Activated naive CD4-positive, alpha-beta T cell treated with anti-CD3 and anti-CD28 coated beads for 36 hours (primary cell): ENCODE measurements at regions of chr1 and their contacts with region 1.

Region 1: DNA sequence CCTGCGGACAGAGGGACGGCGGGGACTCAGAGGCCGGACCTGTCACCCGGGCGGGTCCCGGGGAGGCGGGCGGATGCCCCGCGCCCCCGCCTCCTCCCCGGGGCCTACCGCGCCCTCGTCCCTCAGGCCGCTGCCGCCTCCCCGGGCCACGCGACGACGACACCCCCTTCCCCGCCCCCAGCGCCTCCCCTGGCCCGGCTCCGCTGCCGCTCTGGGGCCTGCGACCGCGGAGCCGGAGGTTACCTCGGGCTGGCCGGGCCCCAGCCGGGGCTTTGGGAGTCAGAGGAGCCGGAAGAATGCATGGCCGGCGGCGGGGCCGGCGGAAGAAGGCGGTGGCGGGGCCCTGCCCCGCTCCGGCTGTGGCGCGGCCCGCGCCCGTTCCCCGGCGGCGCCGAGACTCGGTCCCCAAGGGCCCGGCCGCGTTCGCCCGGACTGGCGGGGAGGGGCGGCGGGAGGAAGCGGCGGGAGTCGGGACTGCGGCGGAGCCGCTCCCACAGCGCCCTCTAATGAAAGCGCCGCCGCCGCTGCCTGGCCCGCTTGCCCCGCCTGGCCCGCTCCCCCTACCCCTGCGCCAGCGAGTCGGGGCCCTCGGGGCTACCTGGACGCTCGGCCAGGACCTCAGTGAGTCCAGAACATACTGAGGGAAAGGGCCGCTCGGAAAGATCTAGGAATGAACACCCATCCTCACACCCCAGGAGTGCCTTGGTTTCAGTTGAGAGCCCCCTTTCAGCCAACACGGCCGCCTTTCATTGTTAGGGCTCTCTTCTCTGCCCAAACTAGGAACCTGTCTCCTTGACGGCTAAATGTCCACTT is at the start of gene LPGAT1:
- DNase-seq: peak; percentile 75
- H3K4me3 Mint-ChIP-seq: peak within 1 kb of the TSS; percentile 82
- H3K27ac Mint-ChIP-seq: peak within 1 kb of the TSS; percentile 75
- H3K4me1 Mint-ChIP-seq: peaks cover 47% of the 10 kb centered on the region
- H3K27me3 Mint-ChIP-seq: no peaks in the 10 kb centered on the region
- total RNA-seq, gene LPGAT1: 18.6 to 21.7 TPM

Region 2: DNA sequence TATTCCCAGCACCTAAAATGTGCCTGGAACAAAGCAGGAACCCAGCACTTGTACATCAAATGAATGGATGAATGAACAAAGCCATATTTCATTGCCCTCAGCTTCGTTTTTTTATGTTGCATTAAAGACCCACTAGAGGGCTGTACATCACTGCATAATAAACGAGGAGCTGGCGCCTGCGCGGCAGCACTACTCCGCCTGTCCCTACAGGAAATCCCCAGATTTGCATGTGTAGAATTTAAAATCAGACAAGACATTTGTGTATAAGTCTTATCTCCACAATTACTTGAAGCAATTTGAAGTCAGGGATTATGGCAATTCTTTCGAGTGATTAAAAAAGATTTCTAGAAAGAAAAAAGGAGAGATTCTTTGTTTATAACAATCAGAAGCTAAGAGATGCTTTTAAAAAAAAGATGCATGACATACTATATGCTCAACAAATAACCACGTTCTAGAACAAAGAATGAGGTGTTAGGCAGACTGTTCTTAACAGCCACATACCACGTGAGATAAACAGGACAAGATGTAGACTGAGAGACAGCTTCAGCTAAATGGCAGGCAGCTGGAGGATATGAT is 149.7 kb before region 1 on chr1:
- CTCF ChIA-PET with region 1: interaction called, 4 read pairs
- intact Hi-C with region 1: loop called (anchors 1 kb)
- DNase-seq: peak; percentile 80
- H3K4me3 Mint-ChIP-seq: no peak overlapping the region
- H3K27ac Mint-ChIP-seq: peak overlapping the region; percentile 24
- H3K4me1 Mint-ChIP-seq: peaks cover 7% of the 10 kb centered on the region
- H3K27me3 Mint-ChIP-seq: no peaks in the 10 kb centered on the region

Region 3: GRCh38 chr1:211951856-211952255 is 121.3 kb after region 1 on chr1:
- CTCF ChIA-PET with region 1: no interaction called
- intact Hi-C with region 1: no loop called
- DNase-seq: no peak
- H3K4me3 Mint-ChIP-seq: no peak overlapping the region
- H3K27ac Mint-ChIP-seq: no peak overlapping the region
- H3K4me1 Mint-ChIP-seq: peaks cover 7% of the 10 kb centered on the region
- H3K27me3 Mint-ChIP-seq: no peaks in the 10 kb centered on the region

Region 4: DNA sequence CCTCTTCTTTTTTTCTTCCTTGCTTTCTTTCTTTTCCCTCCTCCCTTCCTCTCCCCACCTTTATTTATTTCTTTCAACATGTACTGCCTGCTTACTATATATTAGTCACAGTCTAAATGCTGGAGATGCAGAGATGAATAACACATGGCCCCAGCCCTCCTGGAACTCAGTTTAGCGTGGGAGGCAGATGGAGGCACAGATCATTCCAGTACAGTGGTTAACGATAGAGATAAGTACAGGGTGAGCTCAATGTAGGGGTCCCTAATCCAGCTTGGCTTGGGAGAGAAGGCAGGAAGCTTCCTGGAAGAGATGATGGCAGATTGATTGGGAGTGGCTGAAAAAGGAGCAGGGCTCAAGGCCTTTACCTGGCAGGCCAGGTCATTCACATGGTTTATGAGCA is 399.1 kb after region 1 on chr1:
- CTCF ChIA-PET with region 1: no interaction called
- intact Hi-C with region 1: loop called (anchors 5 kb)
- DNase-seq: no peak
- H3K4me3 Mint-ChIP-seq: no peak overlapping the region
- H3K27ac Mint-ChIP-seq: no peak overlapping the region
- H3K4me1 Mint-ChIP-seq: peaks cover 23% of the 10 kb centered on the region
- H3K27me3 Mint-ChIP-seq: no peaks in the 10 kb centered on the region

Region 5: DNA sequence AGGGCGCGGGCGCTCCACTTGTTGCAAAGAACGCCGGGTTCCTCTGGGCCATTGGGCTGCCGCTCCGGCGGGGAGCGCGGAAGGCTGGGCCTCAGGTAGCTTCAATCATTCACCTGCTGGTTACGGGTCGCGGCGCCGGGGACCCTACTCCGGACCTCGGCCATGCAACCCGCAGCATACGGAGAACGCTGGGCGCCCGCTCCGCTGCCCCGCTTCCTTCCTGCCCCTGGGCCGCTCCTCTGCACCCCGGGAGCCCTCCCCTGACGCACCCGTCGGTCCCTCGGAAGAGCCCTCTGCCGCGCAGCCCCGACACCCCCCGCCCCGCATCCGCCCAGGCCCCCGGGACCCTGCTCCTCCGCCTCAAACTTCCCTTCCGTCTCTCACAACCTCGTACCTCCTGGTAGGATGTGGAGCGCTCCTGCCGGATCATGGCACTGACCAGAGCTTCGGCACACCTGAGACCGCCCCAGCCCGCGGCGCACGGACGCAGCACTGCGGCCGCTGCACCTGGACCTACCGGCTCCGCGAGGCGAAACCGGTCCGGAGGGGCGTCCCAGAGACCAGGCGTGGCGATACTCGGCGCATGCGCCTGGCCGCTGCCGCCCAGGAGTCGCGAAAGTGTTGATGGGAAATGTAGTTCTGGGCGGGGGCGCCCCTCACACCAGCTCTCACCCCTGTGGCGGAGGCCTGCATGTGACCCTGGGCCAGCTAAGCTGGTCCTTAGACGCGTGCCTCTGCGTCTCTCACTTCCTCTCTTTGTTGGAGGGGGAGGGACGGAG is 584.0 kb after region 1 on chr1 and contains the start of gene PACC1:
- CTCF ChIA-PET with region 1: no interaction called
- intact Hi-C with region 1: loop called (anchors 5 kb)
- DNase-seq: peak; percentile 88
- H3K4me3 Mint-ChIP-seq: peak within 1 kb of the TSS; percentile 95
- H3K27ac Mint-ChIP-seq: peak within 1 kb of the TSS; percentile 72
- H3K4me1 Mint-ChIP-seq: peaks cover 23% of the 10 kb centered on the region
- H3K27me3 Mint-ChIP-seq: no peaks in the 10 kb centered on the region
- total RNA-seq, gene PACC1: 9.5 to 10.2 TPM